Spleen (tissue), 13 donors: ENCODE measurements at regions of chr15 and their contacts with region 1.

Region 1: GRCh38 chr15:50633653-50634052 is 52.9 kb downstream of the TRPM7 start:
- DNase-seq: no peak
- H3K4me3 ChIP-seq: no peak overlapping the region
- H3K27ac ChIP-seq: no peak overlapping the region
- H3K4me1 ChIP-seq: no peaks in the 10 kb centered on the region
- H3K27me3 ChIP-seq: no peaks in the 10 kb centered on the region
- CTCF ChIP-seq: no peak
- POLR2A ChIP-seq: no peak

Region 2: DNA sequence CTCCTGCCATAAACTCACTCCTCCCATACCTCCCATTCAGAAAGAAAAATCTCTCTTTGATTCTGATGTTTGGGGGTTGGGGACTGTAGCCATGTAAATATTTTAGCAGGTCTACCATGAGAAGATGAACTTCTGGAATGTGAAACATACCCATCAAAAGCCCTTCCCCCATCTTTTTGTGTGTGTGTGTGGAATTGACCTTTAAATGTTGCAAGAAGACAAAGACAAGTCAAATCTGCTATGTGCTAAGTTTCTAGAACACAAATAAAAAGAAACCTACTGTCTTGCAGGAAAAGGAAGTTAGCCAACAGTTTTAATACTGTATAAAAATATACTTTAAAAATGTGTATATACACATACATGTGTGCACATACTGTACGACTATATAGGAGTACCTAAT is 57.5 kb before region 1 on chr15:
- intact Hi-C with region 1: loop called (anchors 10 kb)
- DNase-seq: no peak
- H3K4me3 ChIP-seq: no peak overlapping the region
- H3K27ac ChIP-seq: peak overlapping the region in 3 of 8 donors; percentile 41 to 79 (median 49)
- H3K4me1 ChIP-seq: peaks cover 0 to 4% (median 0%) of the 10 kb centered on the region in 6 donors
- H3K27me3 ChIP-seq: no peaks in the 10 kb centered on the region
- CTCF ChIP-seq: no peak
- POLR2A ChIP-seq: no peak

Region 3: DNA sequence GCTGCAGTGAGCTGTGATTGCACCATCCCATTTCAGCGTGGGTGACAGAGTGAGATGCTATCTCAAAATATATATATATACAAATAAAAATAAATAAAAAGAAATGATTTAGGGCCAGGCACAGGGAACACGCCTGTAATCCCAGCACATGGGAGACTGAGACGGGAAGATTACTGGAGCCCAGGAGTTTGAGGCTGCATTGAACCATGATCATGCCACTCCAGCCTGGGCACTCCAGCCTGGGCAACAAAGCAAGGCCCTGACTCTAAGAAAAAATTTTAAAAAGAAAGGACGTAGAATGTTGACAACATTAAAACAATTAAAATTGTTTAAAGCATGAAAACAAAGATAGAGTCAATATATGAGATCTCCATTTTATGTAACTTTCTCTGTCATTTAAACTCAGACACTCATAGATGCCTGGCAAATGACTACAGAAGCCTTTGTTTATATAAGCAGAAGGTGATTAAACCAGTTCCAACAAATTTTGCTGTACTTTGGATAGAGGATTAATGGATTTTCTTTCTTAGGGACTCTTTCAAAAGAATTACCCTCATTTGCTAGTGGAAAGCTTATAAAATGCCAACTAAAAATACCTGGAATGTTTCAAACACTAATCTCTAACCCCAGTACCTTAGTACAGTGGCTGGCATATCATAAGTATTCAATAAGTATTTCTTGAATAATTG is 63.6 kb after region 1 on chr15:
- intact Hi-C with region 1: loop called (anchors 10 kb)
- DNase-seq: no peak
- H3K4me3 ChIP-seq: no peak overlapping the region
- H3K27ac ChIP-seq: no peak overlapping the region
- H3K4me1 ChIP-seq: no peaks in the 10 kb centered on the region
- H3K27me3 ChIP-seq: no peaks in the 10 kb centered on the region
- CTCF ChIP-seq: no peak
- POLR2A ChIP-seq: no peak